ENCODE measurements at regions of chr2 and their contacts with region 1.

Region 1: DNA sequence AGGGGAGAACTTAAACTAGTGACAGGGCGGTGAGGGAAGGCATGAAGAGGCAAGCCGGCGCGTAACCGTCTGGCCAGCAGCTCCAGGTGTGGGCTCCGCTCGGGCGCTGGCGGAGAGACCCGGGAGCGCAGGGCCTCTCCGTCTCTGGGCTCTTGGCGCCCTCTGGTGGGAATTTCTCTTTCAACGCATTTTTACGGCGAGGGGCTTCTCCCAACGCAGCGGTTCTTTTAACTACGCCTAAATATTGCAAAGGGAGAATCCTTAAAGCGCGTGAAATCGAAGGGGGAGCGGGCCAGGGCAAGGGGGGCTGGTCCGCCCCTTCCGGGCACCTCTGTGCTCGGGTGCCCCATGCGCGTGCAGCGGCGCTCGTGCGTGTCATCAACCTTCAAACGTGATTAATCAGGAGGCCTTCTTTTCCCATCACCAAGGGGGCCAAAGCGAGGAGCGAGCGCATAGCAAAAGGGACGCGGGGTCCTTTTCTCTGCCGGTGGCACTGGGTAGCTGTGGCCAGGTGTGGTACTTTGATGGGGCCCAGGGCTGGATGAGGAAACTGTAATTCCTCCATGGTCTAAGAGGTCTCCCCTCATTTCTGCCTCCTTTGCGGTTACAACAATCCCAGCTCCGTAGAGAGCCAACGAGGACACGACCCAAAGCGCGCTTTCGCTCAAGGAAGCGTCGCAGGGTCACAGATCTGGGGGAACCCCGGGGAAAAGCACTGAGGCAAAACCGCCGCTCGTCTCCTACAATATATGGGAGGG is 762 bp upstream of the GAD1 start:
- DNase-seq: peak; percentile 65
- H3K4me3 Mint-ChIP-seq: peak overlapping the region; percentile 87
- H3K27ac Mint-ChIP-seq: peak overlapping the region; percentile 55
- H3K4me1 Mint-ChIP-seq: peaks cover 38% of the 10 kb centered on the region
- H3K27me3 Mint-ChIP-seq: peaks cover 50% of the 10 kb centered on the region

Region 2: DNA sequence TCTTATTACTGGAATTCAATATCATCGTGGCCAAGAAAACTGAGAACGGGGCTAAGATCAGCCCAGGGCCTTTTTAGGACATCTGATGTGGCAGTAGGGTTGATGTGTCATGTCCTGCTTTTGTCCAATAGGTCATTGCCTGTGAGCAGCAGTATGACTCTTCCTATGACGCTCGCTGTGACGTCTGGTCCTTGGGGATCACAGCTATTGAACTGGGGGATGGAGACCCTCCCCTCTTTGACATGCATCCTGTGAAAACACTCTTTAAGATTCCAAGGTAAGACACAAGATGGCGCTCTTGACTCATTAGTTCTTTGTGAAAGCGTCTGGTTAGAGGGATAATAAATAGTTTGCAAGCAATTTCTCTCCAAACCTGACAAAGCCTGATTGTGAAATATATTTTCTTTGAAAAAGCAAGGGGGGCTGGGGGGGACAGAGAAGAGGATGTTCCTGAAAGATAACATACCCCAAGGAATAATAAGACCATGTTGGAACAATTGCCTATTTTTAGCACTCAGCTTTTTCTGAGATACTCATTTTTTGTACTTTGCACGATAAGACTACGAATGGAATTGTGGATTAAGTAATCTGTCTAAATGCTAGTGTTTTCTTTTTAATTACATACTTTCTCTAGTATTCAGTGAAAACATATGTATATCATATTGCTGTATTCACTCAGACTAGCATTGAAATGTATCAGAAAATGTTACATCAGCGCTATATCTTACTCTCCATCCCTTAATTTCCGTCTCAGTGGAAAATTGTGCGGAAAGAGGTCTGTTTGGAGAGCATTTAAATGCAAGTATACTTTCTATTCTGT is 579.9 kb before region 1 on chr2:
- intact Hi-C with region 1: loop called (anchors 2 kb)
- DNase-seq: peak; percentile 11
- H3K4me3 Mint-ChIP-seq: no peak overlapping the region
- H3K27ac Mint-ChIP-seq: no peak overlapping the region
- H3K4me1 Mint-ChIP-seq: no peaks in the 10 kb centered on the region
- H3K27me3 Mint-ChIP-seq: peaks cover 36% of the 10 kb centered on the region

Region 3: GRCh38 chr2:170361090-170361936 is 454.6 kb before region 1 on chr2:
- intact Hi-C with region 1: loop called (anchors 2 kb)
- DNase-seq: peak; percentile 61
- H3K4me3 Mint-ChIP-seq: peak overlapping the region; percentile 77
- H3K27ac Mint-ChIP-seq: peak overlapping the region; percentile 100
- H3K4me1 Mint-ChIP-seq: peaks cover 60% of the 10 kb centered on the region
- H3K27me3 Mint-ChIP-seq: no peaks in the 10 kb centered on the region

Region 4: DNA sequence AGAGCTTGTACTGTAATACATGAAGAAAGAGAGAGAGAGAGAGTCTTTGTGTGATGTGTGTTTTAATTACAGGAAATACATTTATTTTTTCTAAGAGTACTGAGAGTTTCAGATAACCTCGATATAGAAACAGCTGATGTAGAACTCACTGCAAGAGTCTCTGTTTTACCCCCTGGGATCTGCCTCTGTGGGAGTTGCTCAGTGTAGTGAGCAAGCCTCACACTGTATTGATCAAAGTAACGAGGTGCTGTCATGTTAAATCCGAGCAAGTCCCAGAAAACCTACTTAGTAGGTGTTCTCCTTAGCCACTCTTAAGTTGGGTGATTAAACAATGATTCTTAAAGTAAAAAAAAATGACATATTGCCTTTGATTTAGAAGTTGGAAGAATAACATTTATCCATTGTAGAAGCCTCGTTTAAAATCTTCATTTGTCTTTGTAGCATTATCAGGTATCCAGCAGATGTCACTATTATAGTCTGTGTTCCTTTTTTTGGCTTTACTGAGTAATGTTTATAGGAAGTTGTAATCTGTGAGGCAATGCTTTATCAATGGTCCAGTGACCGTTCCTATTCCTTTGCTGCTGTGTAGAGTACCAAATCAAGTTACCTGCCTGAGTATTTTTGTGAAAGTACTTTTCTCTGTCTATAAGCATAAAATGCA is 419.0 kb before region 1 on chr2:
- intact Hi-C with region 1: loop called (anchors 1 kb)
- DNase-seq: no peak
- H3K4me3 Mint-ChIP-seq: no peak overlapping the region
- H3K27ac Mint-ChIP-seq: peak overlapping the region; percentile 23
- H3K4me1 Mint-ChIP-seq: peaks cover 13% of the 10 kb centered on the region
- H3K27me3 Mint-ChIP-seq: peaks cover 6% of the 10 kb centered on the region

Region 5: DNA sequence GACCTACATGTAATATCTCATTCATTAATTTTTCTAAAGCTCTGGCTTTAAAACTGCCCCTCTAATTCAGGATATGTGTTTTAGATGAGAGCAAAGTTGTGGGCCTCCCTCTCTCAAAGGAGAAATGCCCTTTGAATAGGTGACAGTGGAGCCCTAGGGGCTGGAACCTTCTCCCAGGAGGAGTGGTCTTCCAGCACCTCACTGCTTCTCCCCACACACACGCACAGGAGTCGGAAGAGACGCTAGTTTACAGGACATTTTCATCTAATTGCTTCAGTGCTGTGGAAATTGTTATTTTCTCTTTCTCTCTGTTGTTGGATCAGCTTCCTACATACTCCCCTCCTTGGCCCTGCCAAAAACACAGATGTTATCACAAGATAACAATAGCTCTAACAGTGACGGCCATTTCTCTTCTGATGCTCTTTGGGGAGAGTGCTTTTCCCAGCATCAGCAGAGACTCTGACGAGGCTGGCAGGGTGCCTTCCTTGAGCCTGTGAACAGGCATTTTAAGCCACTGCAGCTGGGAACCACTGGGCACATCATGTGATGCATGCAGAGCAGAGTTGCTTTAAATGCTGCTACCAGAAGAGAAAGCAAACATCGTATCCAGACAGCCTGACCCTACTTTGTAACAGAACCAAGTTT is 310.2 kb before region 1 on chr2:
- intact Hi-C with region 1: loop called (anchors 5 kb)
- DNase-seq: no peak
- H3K4me3 Mint-ChIP-seq: no peak overlapping the region
- H3K27ac Mint-ChIP-seq: peak overlapping the region; percentile 73
- H3K4me1 Mint-ChIP-seq: peaks cover 54% of the 10 kb centered on the region
- H3K27me3 Mint-ChIP-seq: no peaks in the 10 kb centered on the region

Region 6: DNA sequence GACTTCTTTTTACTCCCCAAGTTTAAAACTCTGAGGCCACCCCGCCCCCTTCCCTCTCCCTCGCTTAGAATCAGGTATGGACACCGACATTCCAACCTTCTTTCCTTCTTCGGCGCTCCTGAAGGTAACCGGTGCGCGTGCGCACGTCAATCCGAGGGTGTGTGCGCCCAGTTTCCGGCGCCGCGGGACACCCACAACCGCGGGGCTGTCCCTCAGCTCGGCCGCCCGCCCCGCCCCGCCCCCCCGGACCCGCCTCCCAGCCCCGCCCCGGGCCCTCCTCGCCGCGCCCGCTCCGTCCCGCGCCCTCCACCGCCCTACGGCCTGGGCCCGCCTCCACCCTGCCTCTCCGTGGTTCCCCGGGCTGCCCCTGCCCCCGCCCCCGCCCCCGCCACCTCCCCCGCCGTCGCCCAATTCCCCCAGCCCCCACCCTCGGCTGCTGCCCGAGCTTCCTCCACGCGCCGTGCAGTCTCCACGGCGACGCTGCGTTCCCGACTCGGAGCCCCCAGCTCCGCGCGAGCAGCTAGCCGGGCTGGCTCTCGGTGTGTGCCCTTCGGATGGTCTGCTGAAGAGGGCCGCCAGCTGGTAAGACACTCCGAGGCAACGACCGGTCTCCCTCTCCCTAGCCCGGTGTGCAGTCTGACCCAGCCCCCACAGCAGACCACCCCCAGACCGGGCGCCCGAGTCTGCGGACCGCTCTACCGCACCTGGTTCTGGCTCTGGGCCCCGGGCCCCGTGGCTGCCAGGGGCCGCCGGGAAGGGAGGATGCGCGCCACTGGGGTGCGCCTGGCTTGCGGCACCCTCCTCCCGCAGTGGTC is 45.1 kb before region 1 on chr2:
- intact Hi-C with region 1: loop called (anchors 2 kb)
- DNase-seq: peak; percentile 68
- H3K4me3 Mint-ChIP-seq: peak overlapping the region; percentile 94
- H3K27ac Mint-ChIP-seq: peak overlapping the region; percentile 85
- H3K4me1 Mint-ChIP-seq: peaks cover 10% of the 10 kb centered on the region
- H3K27me3 Mint-ChIP-seq: peaks cover 36% of the 10 kb centered on the region

Region 7: GRCh38 chr2:171452773-171453172 is 636.8 kb after region 1 on chr2:
- intact Hi-C with region 1: no loop called
- DNase-seq: no peak
- H3K4me3 Mint-ChIP-seq: no peak overlapping the region
- H3K27ac Mint-ChIP-seq: no peak overlapping the region
- H3K4me1 Mint-ChIP-seq: no peaks in the 10 kb centered on the region
- H3K27me3 Mint-ChIP-seq: no peaks in the 10 kb centered on the region

Region 8: GRCh38 chr2:172094319-172095145 is 1278.6 kb after region 1 on chr2:
- intact Hi-C with region 1: loop called (anchors 2 kb)
- DNase-seq: no peak
- H3K4me3 Mint-ChIP-seq: peak overlapping the region; percentile 8
- H3K27ac Mint-ChIP-seq: no peak overlapping the region
- H3K4me1 Mint-ChIP-seq: peaks cover 22% of the 10 kb centered on the region
- H3K27me3 Mint-ChIP-seq: peaks cover 78% of the 10 kb centered on the region